Dorsolateral prefrontal cortex (tissue), 120 donors: ENCODE measurements at regions of chr16 and their contacts with region 1.

Region 1: GRCh38 chr16:35598696-35599332 is 2139.4 kb downstream of the TP53TG3F start:
- DNase-seq: no peak
- H3K4me3 ChIP-seq: no peak overlapping the region
- H3K27ac ChIP-seq: no peak overlapping the region
- H3K27me3 ChIP-seq: peaks cover 0 to 13% (median 0%) of the 10 kb centered on the region in 45 donors
- CTCF ChIP-seq: no peak

Region 2: GRCh38 chr16:35639233-35640205 is 40.7 kb after region 1 on chr16:
- intact Hi-C with region 1: loop called in 1 of 2 experiments (anchors 10 kb)
- DNase-seq: no peak
- H3K4me3 ChIP-seq: no peak overlapping the region
- H3K27ac ChIP-seq: no peak overlapping the region
- H3K27me3 ChIP-seq: peaks cover 0 to 27% (median 0%) of the 10 kb centered on the region in 45 donors
- CTCF ChIP-seq: no peak